HCT116 (cell line): ENCODE measurements at regions of chr18 and their contacts with region 1.

Region 1: DNA sequence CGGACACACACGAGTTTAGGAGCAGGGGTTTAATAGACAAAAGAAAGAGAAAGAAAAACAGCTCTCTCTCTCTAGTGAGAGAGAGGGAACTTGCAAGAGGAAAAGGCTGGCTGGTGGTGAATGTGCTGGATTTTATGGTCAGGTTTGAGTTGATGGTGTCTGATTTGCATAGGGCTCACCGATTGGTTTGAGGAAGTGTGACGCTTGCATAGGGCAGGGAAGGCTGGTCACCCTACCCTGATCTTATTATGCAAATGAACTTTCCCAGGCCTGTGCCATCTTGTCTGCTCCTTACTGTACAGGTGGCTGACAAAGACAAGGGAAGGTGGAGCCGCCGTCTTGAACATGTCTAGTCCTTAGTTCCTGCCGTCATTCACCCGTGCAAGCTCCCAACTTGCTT is 408.9 kb downstream of the RIT2 start:
- DNase-seq: no peak
- ATAC-seq: no peak
- H3K4me3 ChIP-seq: no peak overlapping the region
- H3K27ac ChIP-seq: no peak overlapping the region
- H3K4me1 ChIP-seq: no peaks in the 10 kb centered on the region
- H3K27me3 ChIP-seq: no peaks in the 10 kb centered on the region
- CTCF ChIP-seq: no peak
- POLR2A ChIP-seq: no peak
- RAD21 ChIP-seq: no peak

Region 2: DNA sequence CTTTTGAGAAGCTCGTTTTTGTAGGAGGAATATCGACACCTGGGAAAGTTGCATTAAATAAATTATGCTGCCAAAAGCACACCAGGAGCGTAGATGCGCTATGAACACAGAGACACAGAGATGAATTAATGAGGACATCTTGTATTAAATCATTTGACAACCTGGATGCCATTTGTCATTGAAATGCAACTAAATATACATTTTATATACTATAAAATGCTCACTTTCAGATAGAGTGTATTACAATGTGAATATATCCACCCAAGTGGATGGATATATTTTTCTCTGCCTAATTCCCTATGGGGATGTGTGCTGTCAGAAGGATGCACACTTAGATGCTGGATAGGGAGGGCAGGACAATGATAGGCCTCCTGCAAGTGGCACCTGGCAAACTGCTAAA is 17.3 kb before region 1 on chr18:
- CTCF ChIA-PET with region 1: no interaction called
- POLR2A ChIA-PET with region 1: no interaction called
- RAD21 ChIA-PET with region 1: no interaction called
- intact Hi-C with region 1: loop called (anchors 1 kb)
- DNase-seq: no peak
- ATAC-seq: no peak
- H3K4me3 ChIP-seq: no peak overlapping the region
- H3K27ac ChIP-seq: no peak overlapping the region
- H3K4me1 ChIP-seq: no peaks in the 10 kb centered on the region
- H3K27me3 ChIP-seq: no peaks in the 10 kb centered on the region
- CTCF ChIP-seq: no peak
- POLR2A ChIP-seq: no peak
- RAD21 ChIP-seq: no peak